WTC11 (cell line): ENCODE measurements at regions of chr12 and their contacts with region 1.

Region 1: GRCh38 chr12:125330645-125331341 is 265.6 kb downstream of the AACS start:
- DNase-seq: peak; percentile 94
- ATAC-seq: peak; percentile 87
- H3K4me3 Mint-ChIP-seq: peak overlapping the region; percentile 72
- H3K27ac Mint-ChIP-seq: no peak overlapping the region
- H3K4me1 Mint-ChIP-seq: peaks cover 54% of the 10 kb centered on the region
- H3K27me3 Mint-ChIP-seq: peaks cover 3% of the 10 kb centered on the region; the same call in 1 of the 2 replicates
- CTCF ChIP-seq: peak; percentile 89

Region 2: GRCh38 chr12:125183187-125184067 is 147.4 kb before region 1 on chr12:
- CTCF ChIA-PET with region 1: interaction called, 16 read pairs
- POLR2A ChIA-PET with region 1: interaction called, 8 read pairs
- DNase-seq: peak; percentile 91
- ATAC-seq: peak; percentile 46
- H3K4me3 Mint-ChIP-seq: peak overlapping the region; percentile 62
- H3K27ac Mint-ChIP-seq: no peak overlapping the region
- H3K4me1 Mint-ChIP-seq: peaks cover 37% of the 10 kb centered on the region
- H3K27me3 Mint-ChIP-seq: peaks cover 27% of the 10 kb centered on the region
- CTCF ChIP-seq: peak; percentile 100

Region 3: GRCh38 chr12:125305231-125305630 is 25.6 kb before region 1 on chr12:
- CTCF ChIA-PET with region 1: interaction called, 10 read pairs
- POLR2A ChIA-PET with region 1: no interaction called
- DNase-seq: no peak
- ATAC-seq: no peak
- H3K4me3 Mint-ChIP-seq: no peak overlapping the region
- H3K27ac Mint-ChIP-seq: no peak overlapping the region
- H3K4me1 Mint-ChIP-seq: no peaks in the 10 kb centered on the region
- H3K27me3 Mint-ChIP-seq: no peaks in the 10 kb centered on the region
- CTCF ChIP-seq: no peak

Region 4: DNA sequence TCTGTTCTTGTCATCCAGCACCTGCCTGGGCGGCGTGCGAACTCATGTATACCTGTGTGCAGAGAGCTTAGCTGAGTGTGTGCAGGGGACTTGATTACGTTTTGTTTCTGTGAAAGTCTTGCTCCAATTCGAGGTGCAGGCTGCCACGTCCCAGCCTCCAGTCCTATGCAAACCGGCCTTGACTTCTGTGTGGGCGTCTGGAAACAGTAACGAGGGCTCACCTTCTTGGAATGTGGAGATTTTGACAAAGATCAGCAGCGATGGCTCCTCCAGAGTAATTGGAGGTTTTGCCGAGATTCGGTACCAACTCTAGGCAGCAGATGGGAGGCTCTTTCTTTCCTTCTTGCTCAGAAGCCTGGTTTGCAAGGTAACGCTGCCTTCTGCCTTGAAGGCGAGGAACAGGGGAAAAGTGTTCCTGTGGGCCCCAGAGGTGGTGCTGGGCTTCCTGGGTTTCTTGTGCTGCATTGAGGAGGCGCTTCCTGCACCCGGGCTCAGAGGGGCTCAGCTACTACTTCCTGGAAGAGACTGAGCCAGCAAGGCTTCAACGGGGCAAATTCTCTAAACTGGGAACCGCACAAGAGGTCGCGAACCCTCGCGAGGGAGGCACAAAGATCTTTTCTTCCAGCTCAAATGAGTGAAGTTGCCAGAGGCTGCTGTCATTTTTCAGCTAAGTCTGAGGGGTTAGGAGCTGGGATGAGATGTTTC is 16.6 kb before region 1 on chr12:
- CTCF ChIA-PET with region 1: interaction called, 10 read pairs
- POLR2A ChIA-PET with region 1: no interaction called
- DNase-seq: no peak
- ATAC-seq: peak; percentile 58
- H3K4me3 Mint-ChIP-seq: peak overlapping the region; percentile 14
- H3K27ac Mint-ChIP-seq: peak overlapping the region; percentile 28
- H3K4me1 Mint-ChIP-seq: peaks cover 34% of the 10 kb centered on the region
- H3K27me3 Mint-ChIP-seq: no peaks in the 10 kb centered on the region
- CTCF ChIP-seq: no peak

Region 5: GRCh38 chr12:125346362-125346761 is 15.6 kb after region 1 on chr12:
- CTCF ChIA-PET with region 1: interaction called, 68 read pairs
- POLR2A ChIA-PET with region 1: no interaction called
- DNase-seq: no peak
- ATAC-seq: peak; percentile 83
- H3K4me3 Mint-ChIP-seq: peak overlapping the region; percentile 48
- H3K27ac Mint-ChIP-seq: peak overlapping the region; percentile 97
- H3K4me1 Mint-ChIP-seq: peaks cover 58% of the 10 kb centered on the region
- H3K27me3 Mint-ChIP-seq: no peaks in the 10 kb centered on the region
- CTCF ChIP-seq: no peak

Region 6: GRCh38 chr12:125355614-125356013 is 24.8 kb after region 1 on chr12:
- CTCF ChIA-PET with region 1: interaction called, 15 read pairs
- POLR2A ChIA-PET with region 1: no interaction called
- DNase-seq: no peak
- ATAC-seq: no peak
- H3K4me3 Mint-ChIP-seq: no peak overlapping the region
- H3K27ac Mint-ChIP-seq: peak overlapping the region; percentile 74
- H3K4me1 Mint-ChIP-seq: peaks cover 21% of the 10 kb centered on the region
- H3K27me3 Mint-ChIP-seq: no peaks in the 10 kb centered on the region
- CTCF ChIP-seq: no peak

Region 7: DNA sequence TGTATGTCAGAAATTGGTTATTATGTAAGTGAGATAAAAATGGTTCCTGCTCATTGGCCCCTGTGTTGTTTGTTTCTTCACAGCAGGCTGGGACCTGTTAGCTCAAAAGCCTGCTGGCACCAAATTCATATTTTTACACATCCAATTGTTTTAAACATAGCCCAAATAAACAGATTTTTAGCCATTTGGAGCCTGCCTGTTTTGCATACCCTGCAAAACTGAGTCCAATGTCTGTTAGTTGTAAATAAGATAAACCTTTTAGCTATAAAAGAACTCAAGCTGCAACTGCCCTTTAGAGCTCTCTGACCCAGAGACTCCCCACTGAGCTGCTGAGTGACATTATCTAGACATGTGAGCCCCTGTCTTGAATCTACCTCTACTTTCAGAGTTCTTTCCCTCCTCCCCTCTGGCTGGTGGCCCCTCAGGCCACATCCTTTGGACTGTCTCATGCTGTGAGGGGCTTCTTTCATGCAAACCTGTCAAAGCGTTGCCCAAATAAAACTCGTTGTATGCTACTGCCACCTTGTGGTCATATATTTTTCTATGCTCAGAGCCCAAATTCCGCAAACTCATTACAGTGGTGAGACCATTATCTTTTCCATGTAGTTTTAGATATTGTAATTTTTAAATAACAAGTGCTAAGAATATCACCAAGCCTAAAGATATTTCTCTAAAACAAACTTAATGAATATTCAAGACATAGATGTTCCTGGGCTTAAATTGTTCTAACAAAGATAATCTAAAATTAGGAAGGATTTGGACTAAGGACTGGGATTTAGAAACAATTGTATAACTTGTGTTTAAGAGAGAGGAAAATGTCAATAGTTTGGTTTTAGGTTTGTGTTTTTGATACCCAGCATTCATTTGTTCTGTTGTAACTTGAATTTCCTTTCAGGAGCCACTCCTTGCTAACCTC is 72.3 kb after region 1 on chr12:
- CTCF ChIA-PET with region 1: interaction called, 19 read pairs
- POLR2A ChIA-PET with region 1: no interaction called
- DNase-seq: peak; percentile 71
- ATAC-seq: peak; percentile 92
- H3K4me3 Mint-ChIP-seq: no peak overlapping the region
- H3K27ac Mint-ChIP-seq: no peak overlapping the region
- H3K4me1 Mint-ChIP-seq: peaks cover 36% of the 10 kb centered on the region
- H3K27me3 Mint-ChIP-seq: no peaks in the 10 kb centered on the region
- CTCF ChIP-seq: 0 out of 2 replicates have a peak, but pooled peaks have one; percentile 30